CD4-positive, alpha-beta memory T cell (primary cell): ENCODE measurements at regions of chr20 and their contacts with region 1.

Region 1: DNA sequence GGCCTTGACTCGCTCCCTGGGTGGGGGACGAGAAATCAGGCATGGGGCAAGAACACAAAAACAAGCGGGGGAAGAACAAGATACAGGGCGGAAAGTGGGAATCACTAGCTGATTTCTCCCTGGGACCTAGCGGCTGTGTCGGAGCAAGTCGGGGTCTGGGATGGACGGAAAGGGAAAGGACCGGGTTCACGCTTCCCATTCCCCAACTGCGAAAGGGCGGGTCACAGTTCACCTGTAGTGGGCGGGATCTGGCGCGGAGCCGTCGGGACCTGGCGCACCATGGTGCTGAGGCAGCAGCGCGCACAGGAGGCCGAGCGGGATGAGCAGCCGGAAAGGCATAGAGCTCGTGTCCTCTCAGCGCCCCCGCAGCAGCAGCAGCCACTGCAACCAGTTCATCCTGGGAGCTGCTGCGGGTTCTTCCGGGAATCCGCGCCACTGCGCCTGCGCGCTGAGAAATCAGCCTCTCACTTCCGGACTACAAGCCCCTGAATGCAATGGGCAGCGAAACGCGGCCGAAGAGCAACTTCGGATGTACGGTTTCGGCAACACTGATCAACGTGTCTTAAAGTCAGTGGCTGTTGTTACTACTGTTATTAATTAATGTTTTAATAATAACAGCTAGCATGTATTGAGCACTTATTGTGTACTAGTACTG is at the start of gene EDEM2:
- DNase-seq: peak; percentile 92 to 94 (median 93)
- H3K4me3 ChIP-seq: peak within 1 kb of the TSS; percentile 70
- H3K4me3 Mint-ChIP-seq: peak within 1 kb of the TSS; percentile 91 to 99 (median 98)
- H3K27ac ChIP-seq: peak within 1 kb of the TSS; percentile 70
- H3K27ac Mint-ChIP-seq: peak within 1 kb of the TSS; percentile 85 to 98 (median 96)
- H3K4me1 ChIP-seq: peaks cover 29% of the 10 kb centered on the region
- H3K4me1 Mint-ChIP-seq: peaks cover 25 to 46% (median 35%) of the 10 kb centered on the region in 4 donors
- H3K27me3 ChIP-seq: no peaks in the 10 kb centered on the region
- H3K27me3 Mint-ChIP-seq: no peaks in the 10 kb centered on the region
- total RNA-seq, gene EDEM2: 27.2 to 27.6 TPM

Region 2: DNA sequence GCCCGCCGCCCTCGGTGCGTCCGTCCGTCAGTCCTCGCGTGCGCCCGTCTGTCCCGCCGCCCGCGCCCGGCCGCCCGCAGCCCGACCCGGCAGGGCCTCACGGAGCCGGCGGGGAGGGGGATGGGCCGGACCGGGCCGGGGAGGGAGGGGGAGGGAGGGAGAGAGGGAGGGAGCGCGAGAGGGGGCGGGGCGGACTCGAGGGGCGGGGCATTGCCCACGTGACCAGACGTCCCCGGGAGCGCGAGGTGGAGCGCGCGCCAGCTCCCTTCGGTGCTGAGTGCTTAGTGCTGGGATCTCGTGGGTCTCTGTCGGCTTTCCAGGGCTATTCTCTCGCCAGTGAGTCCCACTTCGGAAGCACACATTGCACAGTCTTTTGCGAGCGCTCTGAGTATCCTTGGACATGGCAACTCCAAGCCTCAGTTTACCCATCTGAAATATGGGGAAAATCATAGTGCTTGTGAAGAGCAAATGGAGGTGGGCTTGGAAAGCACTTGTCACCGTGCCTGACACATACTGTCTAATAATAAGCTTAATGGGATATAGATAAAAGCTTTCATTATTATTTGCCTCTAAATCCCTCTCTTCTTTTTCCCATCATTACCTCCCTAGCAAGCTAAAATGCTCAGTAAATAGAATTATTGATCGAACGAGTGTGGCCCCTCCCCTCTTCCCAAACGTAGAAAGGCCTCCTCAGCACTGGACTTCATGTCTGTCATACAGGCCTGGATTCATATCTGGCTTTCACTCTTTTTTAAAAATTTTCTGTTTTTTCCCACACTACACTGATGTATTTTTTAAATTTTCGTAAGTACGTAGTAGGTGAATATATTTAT is 321.3 kb before region 1 on chr20 and contains the start of gene NCOA6:
- CTCF ChIA-PET with region 1: no interaction called
- POLR2A ChIA-PET with region 1: no interaction called
- intact Hi-C with region 1: loop called (anchors 2 kb)
- DNase-seq: peak; percentile 73 to 79 (median 74)
- H3K4me3 ChIP-seq: peak within 1 kb of the TSS; percentile 80 to 91
- H3K4me3 Mint-ChIP-seq: peak within 1 kb of the TSS; percentile 93 to 98 (median 97)
- H3K27ac ChIP-seq: peak within 1 kb of the TSS; percentile 78
- H3K27ac Mint-ChIP-seq: peak within 1 kb of the TSS; percentile 93 to 99 (median 95)
- H3K4me1 ChIP-seq: peaks cover 34% of the 10 kb centered on the region
- H3K4me1 Mint-ChIP-seq: peaks cover 23 to 48% (median 39%) of the 10 kb centered on the region in 4 donors
- H3K27me3 ChIP-seq: no peaks in the 10 kb centered on the region
- H3K27me3 Mint-ChIP-seq: peaks cover 0 to 1% of the 10 kb centered on the region in 2 donors
- total RNA-seq, gene NCOA6: 29.5 to 29.9 TPM

Region 3: DNA sequence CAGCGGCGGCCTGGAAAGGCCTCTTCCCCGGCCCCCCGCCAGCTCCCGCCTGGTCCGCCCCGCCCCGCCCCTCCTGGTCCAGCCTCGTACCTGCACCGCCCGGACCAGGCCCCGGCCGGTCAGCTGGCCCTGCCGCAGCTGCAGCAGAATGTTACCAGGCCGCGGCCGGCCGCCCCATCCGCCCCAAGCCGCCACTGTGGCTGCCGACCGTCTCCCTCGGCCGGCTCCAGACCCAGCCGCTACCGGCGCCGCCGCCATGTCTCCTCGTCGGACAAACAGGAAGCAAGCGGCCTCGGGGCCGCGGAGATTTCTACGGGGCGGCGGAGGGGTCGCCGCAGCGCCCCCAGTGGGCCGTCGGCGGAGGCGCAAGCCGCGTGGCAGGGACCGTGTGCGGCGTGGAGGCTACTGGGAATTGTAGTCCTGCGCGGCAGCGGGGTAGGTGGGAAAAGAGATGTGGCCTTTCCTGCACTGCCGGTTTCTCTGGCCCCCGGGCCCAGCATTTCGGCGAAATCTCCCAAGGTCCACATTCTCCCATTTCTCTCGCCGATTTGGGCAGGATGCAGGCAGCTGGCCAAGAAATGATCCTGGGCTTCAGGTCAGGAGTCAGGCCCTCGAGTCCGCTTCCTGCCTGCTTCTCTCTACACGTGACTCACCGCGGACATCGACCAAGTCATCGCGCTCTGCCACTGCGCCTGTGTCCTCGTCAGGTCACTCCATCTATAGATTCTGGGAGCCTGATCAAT is 54.4 kb before region 1 on chr20 and contains the start of gene TRPC4AP:
- CTCF ChIA-PET with region 1: interaction called, 42 read pairs
- POLR2A ChIA-PET with region 1: interaction called, 15 read pairs
- intact Hi-C with region 1: loop called (anchors 1 kb)
- DNase-seq: peak; percentile 85 to 90 (median 88)
- H3K4me3 ChIP-seq: peak within 1 kb of the TSS; percentile 66 to 88
- H3K4me3 Mint-ChIP-seq: peak within 1 kb of the TSS; percentile 90 to 96 (median 92)
- H3K27ac ChIP-seq: peak within 1 kb of the TSS; percentile 67
- H3K27ac Mint-ChIP-seq: peak within 1 kb of the TSS; percentile 77 to 98 (median 94)
- H3K4me1 ChIP-seq: peaks cover 39% of the 10 kb centered on the region
- H3K4me1 Mint-ChIP-seq: peaks cover 26 to 59% (median 43%) of the 10 kb centered on the region in 4 donors
- H3K27me3 ChIP-seq: no peaks in the 10 kb centered on the region
- H3K27me3 Mint-ChIP-seq: no peaks in the 10 kb centered on the region
- total RNA-seq, gene TRPC4AP: 61.2 to 63.0 TPM

Region 4: DNA sequence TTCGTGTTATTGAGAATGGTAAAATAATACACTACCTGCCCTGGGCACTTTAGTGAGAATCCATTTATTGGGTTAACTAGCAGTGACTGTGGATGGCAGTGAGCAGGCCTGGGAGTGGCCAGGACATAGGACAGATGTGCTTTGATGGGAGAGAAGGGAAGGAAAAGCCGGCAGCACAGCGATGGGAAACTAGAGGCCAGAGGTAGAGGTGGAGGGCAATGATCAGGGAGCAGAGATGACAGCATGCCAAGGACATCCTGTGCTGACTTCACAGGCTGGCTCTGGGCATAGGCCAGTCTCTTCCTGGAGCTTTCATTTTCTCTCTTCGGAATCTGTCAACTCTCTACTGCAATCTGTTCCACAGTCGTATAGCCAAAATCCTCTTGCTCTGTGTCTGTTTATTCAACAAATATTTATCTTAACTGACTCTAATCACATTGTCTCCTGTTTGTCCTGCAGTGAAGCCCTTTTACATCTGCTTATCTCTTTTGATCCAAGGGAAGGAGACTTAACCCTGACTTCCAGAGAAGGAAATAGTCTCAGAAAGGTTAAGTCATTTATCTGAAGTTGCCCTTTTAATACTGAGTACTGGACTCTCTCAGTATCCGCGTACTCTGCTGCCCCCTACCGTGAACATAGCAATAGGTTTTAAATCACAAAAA is 61.0 kb after region 1 on chr20:
- CTCF ChIA-PET with region 1: interaction called, 57 read pairs
- POLR2A ChIA-PET with region 1: interaction called, 7 read pairs
- intact Hi-C with region 1: no loop called
- DNase-seq: peak; percentile 69 to 78 (median 74)
- H3K4me3 ChIP-seq: no peak overlapping the region
- H3K4me3 Mint-ChIP-seq: no peak overlapping the region
- H3K27ac ChIP-seq: no peak overlapping the region
- H3K27ac Mint-ChIP-seq: no peak overlapping the region
- H3K4me1 ChIP-seq: no peaks in the 10 kb centered on the region
- H3K4me1 Mint-ChIP-seq: no peaks in the 10 kb centered on the region
- H3K27me3 ChIP-seq: no peaks in the 10 kb centered on the region
- H3K27me3 Mint-ChIP-seq: no peaks in the 10 kb centered on the region

Region 5: GRCh38 chr20:35277531-35278395 is 130.7 kb after region 1 on chr20 and contains the start of gene MMP24OS:
- CTCF ChIA-PET with region 1: no interaction called
- POLR2A ChIA-PET with region 1: interaction called, 20 read pairs
- intact Hi-C with region 1: no loop called
- DNase-seq: peak; percentile 87 to 92 (median 90)
- H3K4me3 ChIP-seq: peak within 1 kb of the TSS; percentile 59 to 94
- H3K4me3 Mint-ChIP-seq: peak within 1 kb of the TSS; percentile 95 to 98 (median 96)
- H3K27ac ChIP-seq: peak within 1 kb of the TSS; percentile 95
- H3K27ac Mint-ChIP-seq: peak within 1 kb of the TSS; percentile 97 to 100 (median 99)
- H3K4me1 ChIP-seq: peaks cover 14% of the 10 kb centered on the region
- H3K4me1 Mint-ChIP-seq: peaks cover 3 to 41% (median 19%) of the 10 kb centered on the region in 4 donors
- H3K27me3 ChIP-seq: no peaks in the 10 kb centered on the region
- H3K27me3 Mint-ChIP-seq: no peaks in the 10 kb centered on the region
- total RNA-seq, gene MMP24OS: 76.6 to 91.6 TPM

Region 6: DNA sequence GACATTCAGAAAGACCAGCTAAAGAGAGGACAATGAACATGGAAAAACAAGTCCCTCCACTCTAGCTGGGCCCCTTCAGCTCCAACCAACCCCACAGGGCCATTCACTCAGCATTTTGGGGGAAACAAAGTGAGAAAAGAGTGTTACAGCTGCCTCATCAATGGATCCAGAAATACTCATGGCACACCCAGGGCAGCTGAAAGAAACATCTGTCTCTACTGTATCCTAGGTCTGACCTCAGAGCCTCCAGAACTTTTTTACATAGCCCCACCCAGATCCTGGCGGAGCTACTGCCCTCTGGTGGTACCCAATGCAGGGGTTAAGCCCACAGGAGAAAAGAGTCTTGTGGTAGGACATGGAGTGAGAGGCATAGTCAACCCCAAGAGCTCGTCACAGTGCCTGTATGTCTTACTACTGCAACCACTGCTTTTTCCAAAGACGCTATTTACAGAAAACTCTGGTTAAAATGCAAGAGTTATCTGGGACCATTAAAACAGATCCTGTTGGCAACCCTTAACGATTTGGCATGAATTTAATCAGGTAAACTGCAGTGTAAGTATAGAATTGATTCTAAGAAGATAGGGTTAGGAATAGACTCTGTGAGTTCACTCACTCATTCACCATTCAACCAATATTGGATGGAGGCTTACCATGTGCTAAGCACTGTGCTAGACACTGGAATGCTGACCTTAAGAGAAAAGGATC is 182.5 kb after region 1 on chr20:
- CTCF ChIA-PET with region 1: no interaction called
- POLR2A ChIA-PET with region 1: no interaction called
- intact Hi-C with region 1: no loop called
- DNase-seq: peak in 1 of 5 donors; percentile 11
- H3K4me3 ChIP-seq: no peak overlapping the region
- H3K4me3 Mint-ChIP-seq: no peak overlapping the region
- H3K27ac ChIP-seq: no peak overlapping the region
- H3K27ac Mint-ChIP-seq: no peak overlapping the region
- H3K4me1 ChIP-seq: no peaks in the 10 kb centered on the region
- H3K4me1 Mint-ChIP-seq: no peaks in the 10 kb centered on the region
- H3K27me3 ChIP-seq: no peaks in the 10 kb centered on the region
- H3K27me3 Mint-ChIP-seq: no peaks in the 10 kb centered on the region

Region 7: DNA sequence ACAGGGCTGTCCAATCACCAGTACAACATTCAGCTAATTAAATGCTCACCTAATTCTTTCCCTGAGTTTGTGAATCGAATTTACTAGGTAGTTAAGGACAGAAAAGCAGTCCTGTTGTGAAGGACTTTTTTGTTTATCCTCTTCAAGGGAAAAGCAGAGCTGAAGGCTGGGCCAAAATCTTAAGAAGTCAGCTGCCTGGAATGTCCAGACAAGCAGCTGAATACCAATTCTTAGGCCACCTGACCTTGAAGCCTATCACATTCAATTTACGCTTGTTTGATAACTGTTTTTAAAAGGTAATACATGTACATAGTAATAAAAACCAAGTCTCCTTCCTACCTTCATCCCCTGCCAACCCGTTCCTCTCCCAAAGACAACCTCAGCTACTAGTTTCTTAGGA is 208.3 kb after region 1 on chr20:
- CTCF ChIA-PET with region 1: no interaction called
- POLR2A ChIA-PET with region 1: no interaction called
- intact Hi-C with region 1: no loop called
- DNase-seq: no peak
- H3K4me3 ChIP-seq: no peak overlapping the region
- H3K4me3 Mint-ChIP-seq: no peak overlapping the region
- H3K27ac ChIP-seq: no peak overlapping the region
- H3K27ac Mint-ChIP-seq: peak overlapping the region in 1 of 7 donors; percentile 59
- H3K4me1 ChIP-seq: no peaks in the 10 kb centered on the region
- H3K4me1 Mint-ChIP-seq: peaks cover 0 to 2% (median 0%) of the 10 kb centered on the region in 4 donors
- H3K27me3 ChIP-seq: no peaks in the 10 kb centered on the region
- H3K27me3 Mint-ChIP-seq: no peaks in the 10 kb centered on the region

Region 8: DNA sequence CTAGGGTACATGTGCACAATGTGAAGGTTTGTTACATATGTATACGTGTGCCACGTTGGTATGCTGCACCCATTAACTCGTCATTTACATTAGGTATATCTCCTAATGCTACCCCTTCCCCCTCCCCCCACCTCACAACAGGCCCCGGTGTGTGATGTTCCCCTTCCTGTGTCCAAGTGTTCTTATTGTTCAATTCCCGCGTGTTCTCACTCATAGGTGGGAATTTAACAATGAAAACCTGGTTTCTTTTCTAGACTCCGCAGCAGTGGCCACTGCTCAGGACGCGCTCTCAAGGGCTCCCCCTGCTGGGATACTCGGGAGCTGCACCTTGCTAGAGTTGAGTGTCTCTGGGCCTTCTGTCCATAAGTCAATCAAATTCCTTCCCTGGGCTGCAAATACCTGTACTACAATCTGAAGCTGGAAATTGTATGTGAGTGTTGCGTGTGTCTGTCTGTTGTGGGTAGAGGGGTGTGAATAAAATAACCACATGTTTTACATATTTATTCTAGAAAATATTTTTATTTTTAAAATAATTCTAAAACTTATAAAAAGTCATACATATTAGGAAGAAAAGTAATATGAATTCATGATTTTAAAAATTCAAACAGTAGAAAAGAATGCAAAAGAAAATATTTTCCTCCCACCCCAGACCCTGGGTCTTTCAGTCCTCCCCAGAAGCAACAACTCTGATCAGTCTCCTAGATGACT is 300.2 kb after region 1 on chr20:
- CTCF ChIA-PET with region 1: interaction called, 5 read pairs
- POLR2A ChIA-PET with region 1: no interaction called
- intact Hi-C with region 1: loop called (anchors 2 kb)
- DNase-seq: peak; percentile 80 to 84 (median 83)
- H3K4me3 ChIP-seq: peak overlapping the region in 1 of 2 donors; percentile 44
- H3K4me3 Mint-ChIP-seq: peak overlapping the region; percentile 80 to 94 (median 87)
- H3K27ac ChIP-seq: no peak overlapping the region
- H3K27ac Mint-ChIP-seq: peak overlapping the region in 4 of 7 donors; percentile 54 to 82 (median 76)
- H3K4me1 ChIP-seq: no peaks in the 10 kb centered on the region
- H3K4me1 Mint-ChIP-seq: peaks cover 0 to 3% (median 3%) of the 10 kb centered on the region in 4 donors
- H3K27me3 ChIP-seq: no peaks in the 10 kb centered on the region
- H3K27me3 Mint-ChIP-seq: peaks cover 3% of the 10 kb centered on the region in 2 donors

Region 9: DNA sequence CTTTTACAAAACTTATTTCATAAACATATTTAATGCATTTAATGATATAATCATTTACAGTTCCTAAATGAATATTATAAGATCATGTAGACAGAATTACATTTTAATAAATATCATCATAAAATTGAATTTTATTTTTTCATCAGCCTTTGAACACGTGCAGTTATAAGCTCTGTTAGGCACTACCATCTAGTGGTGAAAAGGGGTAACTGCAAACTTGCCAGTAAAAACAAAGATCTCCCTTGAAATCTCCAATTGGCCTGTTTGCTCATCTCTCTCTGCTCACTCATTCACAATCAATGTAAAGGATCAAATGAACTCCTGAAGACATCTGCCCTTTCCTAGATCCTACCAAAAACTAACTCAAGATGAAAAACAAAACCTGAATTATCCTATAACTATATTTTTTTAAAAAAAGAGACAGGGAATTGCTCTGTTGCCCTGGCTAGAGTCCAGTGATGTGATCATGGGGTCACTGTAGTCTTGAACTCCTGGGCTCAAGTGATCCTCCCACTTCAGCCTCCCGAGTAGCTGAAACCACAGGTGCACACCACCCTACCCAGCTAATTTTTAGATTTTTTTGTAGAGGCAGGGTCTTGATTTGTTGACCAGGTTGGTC is 1772.8 kb after region 1 on chr20:
- CTCF ChIA-PET with region 1: no interaction called
- POLR2A ChIA-PET with region 1: no interaction called
- intact Hi-C with region 1: no loop called
- DNase-seq: peak; percentile 58 to 66 (median 61)
- H3K4me3 ChIP-seq: no peak overlapping the region
- H3K4me3 Mint-ChIP-seq: no peak overlapping the region
- H3K27ac ChIP-seq: no peak overlapping the region
- H3K27ac Mint-ChIP-seq: peak overlapping the region; percentile 13 to 84 (median 60)
- H3K4me1 ChIP-seq: peaks cover 21% of the 10 kb centered on the region
- H3K4me1 Mint-ChIP-seq: peaks cover 7 to 20% (median 11%) of the 10 kb centered on the region in 4 donors
- H3K27me3 ChIP-seq: no peaks in the 10 kb centered on the region
- H3K27me3 Mint-ChIP-seq: no peaks in the 10 kb centered on the region